ENCODE measurements at regions of chr1 and their contacts with region 1.

Region 1: GRCh38 chr1:20574686-20575540 is 14.0 kb upstream of the CDA start:
- DNase-seq: peak; percentile 93
- ATAC-seq: peak; percentile 93

Region 2: DNA sequence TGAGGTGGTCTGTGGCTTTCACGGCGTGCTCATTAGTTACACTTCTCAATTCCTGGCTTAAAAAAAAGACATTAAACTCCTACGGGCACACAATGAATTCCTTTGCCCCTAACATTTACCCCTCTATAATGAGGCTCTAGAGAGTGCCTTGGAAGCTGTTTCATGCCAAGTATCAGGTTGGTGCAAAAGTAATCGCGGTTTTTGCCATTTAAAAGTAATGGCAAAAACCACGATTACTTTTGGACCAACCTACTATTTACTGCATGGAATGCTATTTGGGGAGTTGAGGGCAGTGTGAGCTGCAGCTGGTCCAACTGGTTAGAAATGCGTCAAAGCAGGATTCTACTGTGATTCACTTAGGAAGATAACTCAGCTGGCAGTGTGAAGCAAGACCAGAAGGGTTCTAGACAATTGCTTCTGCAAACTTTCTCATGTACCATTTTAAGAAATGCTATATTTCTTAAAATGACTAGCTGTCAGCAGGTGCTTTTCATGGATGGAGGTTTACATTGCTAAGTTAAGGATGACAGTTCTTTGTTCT is 367.4 kb before region 1 on chr1:
- intact Hi-C with region 1: no loop called
- DNase-seq: no peak
- ATAC-seq: no peak

Region 3: GRCh38 chr1:20633190-20634064 is 58.5 kb after region 1 on chr1 and contains the start of gene PINK1:
- intact Hi-C with region 1: loop called (anchors 5 kb)
- DNase-seq: peak; percentile 94
- ATAC-seq: peak; percentile 91
- total RNA-seq, gene PINK1: 288 TPM

Region 4: GRCh38 chr1:20640183-20640597 is 65.3 kb after region 1 on chr1:
- intact Hi-C with region 1: loop called (anchors 2 kb)
- DNase-seq: no peak
- ATAC-seq: no peak